Mammary epithelial cell (primary cell): ENCODE measurements at regions of chr1 and their contacts with region 1.

Region 1: DNA sequence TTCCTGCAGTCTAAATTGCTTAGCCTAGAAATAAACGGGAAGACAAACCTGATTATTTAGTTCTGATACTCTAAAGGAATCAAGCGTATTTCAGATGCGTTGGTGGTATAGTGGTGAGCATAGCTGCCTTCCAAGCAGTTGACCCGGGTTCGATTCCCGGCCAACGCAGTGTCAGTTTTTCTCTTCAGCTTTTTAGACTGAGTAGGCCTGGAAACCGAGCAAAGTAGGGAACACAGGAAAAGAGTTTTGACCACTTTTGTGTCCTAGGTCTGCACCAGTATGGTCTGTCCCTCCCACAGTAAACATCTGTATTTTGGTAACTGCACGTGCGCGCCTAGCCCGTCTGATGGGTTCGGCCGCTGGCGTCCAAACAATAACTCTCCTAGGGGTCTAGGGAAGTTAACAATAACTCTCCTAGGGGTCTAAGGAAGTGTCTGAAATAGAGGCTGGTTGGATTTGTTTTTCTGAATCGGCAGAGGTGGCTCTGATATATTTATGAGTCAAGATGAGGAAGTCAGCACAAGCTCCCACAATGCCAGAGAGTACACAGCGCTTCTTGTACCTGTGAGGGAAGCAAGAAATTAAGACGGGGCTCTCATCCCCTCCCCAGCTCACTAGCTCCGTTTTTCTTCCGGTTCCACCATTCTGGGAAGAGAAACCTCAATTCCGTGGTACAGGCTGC is 15.6 kb upstream of the HJV start:
- DNase-seq: peak; percentile 81
- H3K4me3 ChIP-seq: peak overlapping the region; percentile 65 to 81 (median 68)
- H3K27ac ChIP-seq: peak overlapping the region; percentile 63
- H3K4me1 ChIP-seq: no peaks in the 10 kb centered on the region
- H3K27me3 ChIP-seq: no peaks in the 10 kb centered on the region
- CTCF ChIP-seq: no peak

Region 2: GRCh38 chr1:145996433-145997015 is 40.6 kb before region 1 on chr1 and contains the start of gene TXNIP:
- CTCF ChIA-PET with region 1: no interaction called
- dilution Hi-C with region 1: no loop called
- in situ Hi-C with region 1: no loop called
- intact Hi-C with region 1: loop called (anchors 2 kb)
- DNase-seq: peak; percentile 93
- H3K4me3 ChIP-seq: peak within 1 kb of the TSS; percentile 58 to 84 (median 81)
- H3K27ac ChIP-seq: peak within 1 kb of the TSS; percentile 71
- H3K4me1 ChIP-seq: peaks cover 36% of the 10 kb centered on the region
- H3K27me3 ChIP-seq: no peaks in the 10 kb centered on the region
- CTCF ChIP-seq: no peak
- total RNA-seq, gene TXNIP: 92.8 to 355 TPM

Region 3: GRCh38 chr1:146049436-146049835 is 12.3 kb after region 1 on chr1:
- CTCF ChIA-PET with region 1: no interaction called
- dilution Hi-C with region 1: no loop called
- in situ Hi-C with region 1: no loop called
- intact Hi-C with region 1: loop called (anchors 1 kb)
- DNase-seq: no peak
- H3K4me3 ChIP-seq: no peak overlapping the region
- H3K27ac ChIP-seq: no peak overlapping the region
- H3K4me1 ChIP-seq: no peaks in the 10 kb centered on the region
- H3K27me3 ChIP-seq: no peaks in the 10 kb centered on the region
- CTCF ChIP-seq: no peak